ENCODE measurements at regions of chr19 and their contacts with region 1.

Region 1: GRCh38 chr19:10269333-10270179 is 1.4 kb upstream of the ICAM1 start:
- DNase-seq: peak; percentile 88
- ATAC-seq: peak; percentile 48
- H3K4me3 Mint-ChIP-seq: peak overlapping the region; percentile 87
- H3K27ac Mint-ChIP-seq: peak overlapping the region; percentile 92
- H3K4me1 Mint-ChIP-seq: peaks cover 38% of the 10 kb centered on the region
- H3K27me3 Mint-ChIP-seq: no peaks in the 10 kb centered on the region
- CTCF ChIP-seq: peak; percentile 71

Region 2: DNA sequence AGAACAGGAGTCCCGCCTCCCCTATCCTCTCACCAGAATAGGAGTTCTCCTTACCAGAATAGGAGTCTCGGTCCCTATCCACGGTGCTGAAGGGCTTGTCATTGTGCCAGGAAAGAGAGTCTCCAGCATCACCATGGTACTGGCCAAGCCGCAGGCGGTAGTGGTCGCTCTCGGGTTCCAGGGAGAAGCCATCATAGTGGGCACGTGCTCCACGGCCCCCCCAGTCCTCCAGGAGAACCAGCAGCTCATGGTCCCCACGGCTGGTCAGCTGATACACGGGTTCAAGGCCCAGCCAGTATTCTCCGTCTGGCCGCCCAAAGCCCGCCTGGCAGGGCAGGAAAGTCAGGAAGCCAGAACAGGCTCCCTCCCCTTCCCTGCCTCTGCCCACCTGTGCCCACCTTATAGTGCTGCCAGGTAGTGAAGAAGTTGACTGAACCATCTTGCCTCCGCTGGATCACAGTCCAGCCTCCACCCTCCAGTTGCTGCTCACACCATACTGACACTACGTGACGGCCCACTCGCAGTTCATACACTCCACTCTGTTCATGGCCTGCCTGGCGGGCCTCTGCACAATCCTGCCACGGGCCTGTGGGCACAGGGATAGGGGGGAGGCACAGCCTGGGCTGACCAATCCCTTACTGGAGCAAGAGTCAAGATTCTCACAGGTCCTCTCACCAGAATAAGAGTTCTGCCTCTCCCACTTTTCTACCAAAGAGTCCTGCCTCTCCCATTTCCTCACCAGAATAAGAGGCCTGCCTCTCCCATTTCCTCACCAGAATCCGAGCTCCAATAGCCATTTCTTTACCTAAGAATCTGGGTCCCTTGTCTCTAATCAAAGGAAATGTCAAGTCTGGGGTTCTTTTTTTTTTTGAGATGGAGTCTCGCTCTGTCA is 176.0 kb before region 1 on chr19:
- CTCF ChIA-PET with region 1: no interaction called
- POLR2A ChIA-PET with region 1: no interaction called
- intact Hi-C with region 1: no loop called
- DNase-seq: no peak
- ATAC-seq: no peak
- H3K4me3 Mint-ChIP-seq: no peak overlapping the region
- H3K27ac Mint-ChIP-seq: peak overlapping the region; percentile 46
- H3K4me1 Mint-ChIP-seq: peaks cover 33% of the 10 kb centered on the region
- H3K27me3 Mint-ChIP-seq: no peaks in the 10 kb centered on the region
- CTCF ChIP-seq: no peak

Region 3: DNA sequence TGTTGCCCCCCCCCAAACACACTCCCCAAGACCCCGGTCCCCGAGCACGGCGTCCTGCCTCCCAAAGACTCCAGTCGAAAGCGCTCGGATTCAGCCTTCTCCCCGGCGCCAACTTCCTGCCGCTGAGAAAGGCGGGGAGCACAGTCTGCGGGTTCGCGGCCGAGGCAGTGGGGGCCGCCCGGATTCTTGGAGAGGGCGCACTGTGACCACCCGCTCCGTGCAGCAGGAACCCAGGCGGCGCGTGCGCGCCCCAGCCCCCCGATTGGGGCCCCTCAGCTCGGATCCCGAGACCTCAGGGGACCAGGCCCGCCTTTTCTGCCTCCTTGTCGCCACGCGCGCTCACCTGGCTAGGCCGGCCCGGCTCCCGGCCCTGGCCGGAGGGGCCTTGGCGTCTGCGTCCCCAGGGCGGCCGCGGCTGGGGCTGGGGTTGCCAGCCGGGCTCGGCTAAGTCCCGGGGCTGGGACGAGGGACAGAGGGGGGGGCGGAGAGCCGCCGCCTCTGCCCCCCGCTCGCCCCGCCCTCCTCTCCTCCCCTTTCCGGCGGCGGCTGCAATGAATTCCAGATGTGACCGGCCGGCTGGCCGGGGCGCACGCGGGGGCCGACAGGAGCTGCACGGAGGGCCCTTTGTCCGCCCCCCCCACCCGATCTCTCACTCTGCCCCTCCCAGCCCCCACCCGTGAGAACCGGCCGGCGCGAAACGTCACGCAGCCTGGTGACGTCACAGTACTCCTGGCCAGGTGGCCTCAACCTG is 38.5 kb before region 1 on chr19 and contains the start of gene S1PR2:
- CTCF ChIA-PET with region 1: interaction called, 4 read pairs
- POLR2A ChIA-PET with region 1: interaction called, 14 read pairs
- intact Hi-C with region 1: loop called (anchors 2 kb)
- DNase-seq: peak; percentile 64
- ATAC-seq: peak; percentile 25
- H3K4me3 Mint-ChIP-seq: peak within 1 kb of the TSS; percentile 84
- H3K27ac Mint-ChIP-seq: peak within 1 kb of the TSS; percentile 46
- H3K4me1 Mint-ChIP-seq: peaks cover 46% of the 10 kb centered on the region
- H3K27me3 Mint-ChIP-seq: no peaks in the 10 kb centered on the region
- CTCF ChIP-seq: no peak
- total RNA-seq, gene S1PR2: 5.3 and 5.6 TPM in 2 replicates

Region 4: DNA sequence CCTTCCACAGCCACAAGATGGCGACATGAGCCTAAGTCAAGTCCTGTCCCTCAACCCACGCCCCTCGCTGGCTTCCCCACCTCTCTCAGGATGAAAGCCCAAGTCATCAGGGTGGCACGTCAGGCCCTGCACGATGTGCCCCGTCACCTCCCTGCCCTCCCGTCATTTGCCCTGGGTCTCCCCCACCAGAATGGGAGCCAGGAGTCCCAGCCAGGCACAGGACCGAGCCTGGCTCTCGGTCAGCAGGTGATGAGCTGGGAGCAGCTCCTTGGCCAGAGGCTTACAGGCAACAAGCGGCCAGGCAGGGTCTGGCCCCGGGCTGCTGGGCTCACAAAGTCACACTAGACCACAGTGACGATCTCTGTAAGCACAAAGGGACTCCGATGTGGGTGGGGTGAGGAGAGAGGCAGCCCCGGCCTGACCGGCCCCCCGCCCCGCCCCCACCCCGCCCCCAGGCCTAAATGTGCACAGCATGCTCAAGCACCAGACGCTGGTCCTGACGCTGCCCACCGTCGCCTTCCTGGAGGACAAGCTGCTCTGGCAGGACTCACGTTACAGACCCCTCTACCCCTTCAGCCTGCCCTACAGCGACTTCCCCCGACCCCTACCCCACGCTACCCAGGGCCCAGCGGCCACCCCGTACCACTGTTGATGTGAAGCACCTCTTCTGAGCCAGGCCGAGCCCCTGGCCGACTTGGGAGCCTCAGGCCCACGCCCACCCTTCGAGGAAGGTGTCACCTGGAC is 10.2 kb before region 1 on chr19:
- CTCF ChIA-PET with region 1: interaction called, 52 read pairs
- POLR2A ChIA-PET with region 1: interaction called, 20 read pairs
- intact Hi-C with region 1: loop called (anchors 1 kb)
- DNase-seq: peak; percentile 68
- ATAC-seq: peak; percentile 93
- H3K4me3 Mint-ChIP-seq: no peak overlapping the region
- H3K27ac Mint-ChIP-seq: no peak overlapping the region
- H3K4me1 Mint-ChIP-seq: peaks cover 5% of the 10 kb centered on the region
- H3K27me3 Mint-ChIP-seq: no peaks in the 10 kb centered on the region
- CTCF ChIP-seq: no peak

Region 5: DNA sequence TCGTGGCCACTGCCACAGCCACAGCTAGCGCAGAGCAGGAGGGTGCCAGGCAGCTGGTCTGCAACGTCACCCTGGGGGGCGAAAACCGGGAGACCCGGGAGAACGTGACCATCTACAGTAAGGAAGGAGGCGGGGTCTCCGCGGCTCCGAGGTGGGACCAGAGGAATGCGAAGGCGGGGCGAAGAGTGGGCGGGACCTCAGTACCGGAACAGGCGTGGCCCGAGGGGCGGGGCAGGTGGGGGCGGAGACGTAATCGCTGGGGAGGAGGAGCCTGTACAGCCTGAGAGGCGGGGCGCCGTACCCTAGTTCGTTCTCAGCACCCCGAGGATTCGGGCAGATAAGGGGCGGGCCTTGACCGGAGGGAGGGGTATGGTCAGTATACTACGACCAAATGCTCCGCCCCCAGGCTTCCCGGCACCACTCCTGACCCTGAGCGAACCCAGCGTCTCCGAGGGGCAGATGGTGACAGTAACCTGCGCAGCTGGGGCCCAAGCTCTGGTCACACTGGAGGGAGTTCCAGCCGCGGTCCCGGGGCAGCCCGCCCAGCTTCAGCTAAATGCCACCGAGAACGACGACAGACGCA is 22.7 kb after region 1 on chr19:
- CTCF ChIA-PET with region 1: interaction called, 12 read pairs
- POLR2A ChIA-PET with region 1: interaction called, 128 read pairs
- intact Hi-C with region 1: loop called (anchors 1 kb)
- DNase-seq: peak; percentile 50
- ATAC-seq: peak; percentile 16
- H3K4me3 Mint-ChIP-seq: peak overlapping the region; percentile 73
- H3K27ac Mint-ChIP-seq: peak overlapping the region; percentile 59
- H3K4me1 Mint-ChIP-seq: peaks cover 70% of the 10 kb centered on the region
- H3K27me3 Mint-ChIP-seq: peaks cover 43% of the 10 kb centered on the region
- CTCF ChIP-seq: no peak

Region 6: DNA sequence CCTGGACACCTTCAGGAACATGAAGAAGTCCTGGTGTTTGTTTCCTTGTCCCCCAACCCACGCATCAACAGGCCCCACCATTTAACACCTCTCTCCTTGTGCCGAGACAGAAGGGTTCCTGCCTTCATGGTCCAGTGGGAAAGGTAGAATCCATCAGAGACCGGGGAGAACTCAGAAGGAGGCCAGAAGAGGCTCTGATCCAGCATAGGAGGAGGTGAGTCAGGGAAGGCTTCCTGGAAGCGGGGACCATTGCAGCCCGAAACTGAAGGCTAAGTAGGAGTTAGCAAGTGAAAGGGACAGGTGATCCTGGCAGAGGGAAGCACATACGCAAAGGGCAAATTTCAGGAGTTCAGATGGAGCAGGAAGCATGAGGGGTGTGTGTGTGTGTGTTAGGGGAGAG is 69.4 kb after region 1 on chr19:
- CTCF ChIA-PET with region 1: no interaction called
- POLR2A ChIA-PET with region 1: interaction called, 54 read pairs
- intact Hi-C with region 1: no loop called
- DNase-seq: no peak
- ATAC-seq: no peak
- H3K4me3 Mint-ChIP-seq: peak overlapping the region; percentile 97
- H3K27ac Mint-ChIP-seq: peak overlapping the region; percentile 92
- H3K4me1 Mint-ChIP-seq: peaks cover 33% of the 10 kb centered on the region
- H3K27me3 Mint-ChIP-seq: no peaks in the 10 kb centered on the region
- CTCF ChIP-seq: no peak

Region 7: GRCh38 chr19:10403137-10404021 is 133.8 kb after region 1 on chr19 and contains the start of gene CDC37:
- CTCF ChIA-PET with region 1: interaction called, 5 read pairs
- POLR2A ChIA-PET with region 1: interaction called, 14 read pairs
- intact Hi-C with region 1: loop called (anchors 1 kb)
- DNase-seq: peak; percentile 99
- ATAC-seq: peak; percentile 80
- H3K4me3 Mint-ChIP-seq: peak within 1 kb of the TSS; percentile 95
- H3K27ac Mint-ChIP-seq: peak within 1 kb of the TSS; percentile 85
- H3K4me1 Mint-ChIP-seq: peaks cover 75% of the 10 kb centered on the region
- H3K27me3 Mint-ChIP-seq: no peaks in the 10 kb centered on the region
- CTCF ChIP-seq: no peak
- total RNA-seq, gene CDC37: 172 and 173 TPM in 2 replicates

Region 8: GRCh38 chr19:10431943-10432735 is 162.6 kb after region 1 on chr19:
- CTCF ChIA-PET with region 1: interaction called, 4 read pairs
- POLR2A ChIA-PET with region 1: interaction called, 10 read pairs
- intact Hi-C with region 1: no loop called
- DNase-seq: peak; percentile 73
- ATAC-seq: peak; percentile 51
- H3K4me3 Mint-ChIP-seq: peak overlapping the region; percentile 88
- H3K27ac Mint-ChIP-seq: peak overlapping the region; percentile 74
- H3K4me1 Mint-ChIP-seq: peaks cover 61% of the 10 kb centered on the region
- H3K27me3 Mint-ChIP-seq: peaks cover 6% of the 10 kb centered on the region
- CTCF ChIP-seq: no peak

Region 9: GRCh38 chr19:11578258-11579142 is 1308.9 kb after region 1 on chr19:
- CTCF ChIA-PET with region 1: no interaction called
- POLR2A ChIA-PET with region 1: no interaction called
- intact Hi-C with region 1: no loop called
- DNase-seq: no peak
- ATAC-seq: peak; percentile 26
- H3K4me3 Mint-ChIP-seq: peak overlapping the region; percentile 81
- H3K27ac Mint-ChIP-seq: peak overlapping the region; percentile 82
- H3K4me1 Mint-ChIP-seq: peaks cover 89% of the 10 kb centered on the region
- H3K27me3 Mint-ChIP-seq: no peaks in the 10 kb centered on the region
- CTCF ChIP-seq: no peak

Measured in activated B cell treated with CpG ODN at 0.5 μM for 24 hours (primary cell).